ENCODE measurements at regions of chr5 and their contacts with region 1.

Region 1: GRCh38 chr5:163221581-163221980 is 215.8 kb upstream of the CCNG1 start:
- DNase-seq: no peak
- ATAC-seq: no peak
- H3K4me3 ChIP-seq: no peak overlapping the region
- H3K27ac ChIP-seq: no peak overlapping the region
- H3K4me1 ChIP-seq: no peaks in the 10 kb centered on the region
- H3K27me3 ChIP-seq: no peaks in the 10 kb centered on the region
- CTCF ChIP-seq: no peak
- POLR2A ChIP-seq: no peak
- RAD21 ChIP-seq: no peak

Region 2: GRCh38 chr5:161562446-161562845 is 1659.1 kb before region 1 on chr5:
- CTCF ChIA-PET with region 1: no interaction called
- POLR2A ChIA-PET with region 1: no interaction called
- RAD21 ChIA-PET with region 1: no interaction called
- intact Hi-C with region 1: loop called (anchors 5 kb)
- DNase-seq: no peak
- ATAC-seq: no peak
- H3K4me3 ChIP-seq: no peak overlapping the region
- H3K27ac ChIP-seq: no peak overlapping the region
- H3K4me1 ChIP-seq: no peaks in the 10 kb centered on the region
- H3K27me3 ChIP-seq: no peaks in the 10 kb centered on the region
- CTCF ChIP-seq: no peak
- POLR2A ChIP-seq: no peak
- RAD21 ChIP-seq: no peak